ENCODE measurements at regions of chr1 and their contacts with region 1.

Region 1: GRCh38 chr1:151534665-151535278 is 5.3 kb upstream of the TUFT1 start:
- DNase-seq: peak; percentile 51 to 77
- H3K4me3 ChIP-seq: no peak overlapping the region
- H3K27ac ChIP-seq: no peak overlapping the region
- H3K4me1 ChIP-seq: peaks cover 33% of the 10 kb centered on the region
- H3K27me3 ChIP-seq: no peaks in the 10 kb centered on the region
- CTCF ChIP-seq: peak; percentile 93

Region 2: GRCh38 chr1:151443846-151444782 is 90.7 kb before region 1 on chr1:
- CTCF ChIA-PET with region 1: no interaction called
- POLR2A ChIA-PET with region 1: no interaction called
- intact Hi-C with region 1: loop called (anchors 5 kb)
- DNase-seq: peak; percentile 62 to 77
- H3K4me3 ChIP-seq: no peak overlapping the region
- H3K27ac ChIP-seq: peak overlapping the region; percentile 62
- H3K4me1 ChIP-seq: peaks cover 11% of the 10 kb centered on the region
- H3K27me3 ChIP-seq: no peaks in the 10 kb centered on the region
- CTCF ChIP-seq: peak; percentile 84

Region 3: DNA sequence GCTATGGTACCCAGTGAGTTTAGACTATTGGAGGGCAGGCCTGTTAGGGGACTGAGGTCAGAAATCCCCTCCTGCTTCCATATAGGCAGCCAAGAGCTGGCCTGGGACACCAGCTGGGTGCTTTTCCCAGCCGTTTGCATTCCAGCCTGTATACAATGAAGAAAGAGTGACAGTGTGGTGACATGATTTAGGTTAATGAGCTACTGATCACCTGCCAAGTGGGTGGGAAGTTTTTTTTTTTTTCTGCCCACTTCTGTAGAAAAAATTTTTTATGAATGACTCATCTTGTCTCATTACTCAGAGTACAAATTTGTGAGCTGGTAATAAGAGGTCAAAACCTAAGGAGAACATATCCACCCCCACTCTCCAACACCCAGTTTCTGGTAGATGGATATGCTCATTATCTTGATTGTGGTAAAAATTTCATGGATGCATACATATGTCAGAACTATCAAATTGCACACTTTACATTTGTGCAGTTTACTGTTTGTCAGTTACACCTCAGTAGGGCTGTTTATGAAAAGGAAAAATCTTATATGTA is 40.0 kb before region 1 on chr1:
- CTCF ChIA-PET with region 1: interaction called, 5 read pairs
- POLR2A ChIA-PET with region 1: interaction called, 31 read pairs
- intact Hi-C with region 1: no loop called
- DNase-seq: peak; percentile 64 to 92
- H3K4me3 ChIP-seq: no peak overlapping the region
- H3K27ac ChIP-seq: peak overlapping the region; percentile 73
- H3K4me1 ChIP-seq: peaks cover 25% of the 10 kb centered on the region
- H3K27me3 ChIP-seq: no peaks in the 10 kb centered on the region
- CTCF ChIP-seq: no peak

Region 4: DNA sequence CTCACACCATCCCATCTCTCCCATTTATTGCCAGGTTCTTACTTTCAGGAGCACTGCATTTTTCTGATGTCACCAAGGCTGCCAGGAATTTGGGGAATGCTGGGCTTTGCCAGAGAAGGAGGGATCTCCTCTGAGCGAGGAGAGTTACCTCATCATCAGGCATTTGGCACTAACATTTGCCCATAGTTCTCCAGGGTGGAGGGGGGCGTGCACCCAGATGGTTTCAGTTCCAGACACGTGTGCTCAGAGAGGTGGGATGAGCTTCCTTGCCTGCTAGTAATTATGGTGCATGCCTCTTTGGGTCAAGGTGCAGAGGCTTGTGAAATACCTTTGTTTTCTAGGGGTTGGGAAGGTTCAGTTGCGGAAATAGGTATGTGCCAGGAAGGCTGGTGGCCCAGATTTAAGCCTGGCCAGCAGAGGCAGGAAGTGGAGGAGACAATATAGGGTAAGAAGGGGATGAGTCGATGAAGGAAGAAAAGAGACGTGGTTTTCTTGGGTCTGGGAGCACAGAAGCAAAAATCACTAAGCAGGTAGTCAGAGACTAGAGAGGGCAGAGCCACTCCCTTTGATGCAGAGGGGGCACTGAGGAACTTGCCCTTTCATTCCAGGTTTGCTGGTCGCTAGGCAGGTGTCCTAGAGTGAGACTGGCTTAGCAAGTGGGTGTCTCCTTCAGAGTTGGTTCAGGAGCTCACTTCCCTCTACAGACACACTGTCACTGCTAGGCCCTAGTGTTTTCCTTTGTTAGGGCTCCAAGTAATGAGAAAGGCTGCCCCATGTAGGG is 12.5 kb after region 1 on chr1:
- CTCF ChIA-PET with region 1: no interaction called
- POLR2A ChIA-PET with region 1: interaction called, 14 read pairs
- intact Hi-C with region 1: loop called (anchors 1 kb)
- DNase-seq: peak; percentile 92 to 99
- H3K4me3 ChIP-seq: peak overlapping the region; percentile 24; the same call in 1 of the 2 replicates
- H3K27ac ChIP-seq: peak overlapping the region; percentile 99
- H3K4me1 ChIP-seq: peaks cover 87% of the 10 kb centered on the region
- H3K27me3 ChIP-seq: no peaks in the 10 kb centered on the region
- CTCF ChIP-seq: no peak; the same call in 1 of the 2 replicates